ENCODE measurements at regions of chr20 and their contacts with region 1.

Region 1: DNA sequence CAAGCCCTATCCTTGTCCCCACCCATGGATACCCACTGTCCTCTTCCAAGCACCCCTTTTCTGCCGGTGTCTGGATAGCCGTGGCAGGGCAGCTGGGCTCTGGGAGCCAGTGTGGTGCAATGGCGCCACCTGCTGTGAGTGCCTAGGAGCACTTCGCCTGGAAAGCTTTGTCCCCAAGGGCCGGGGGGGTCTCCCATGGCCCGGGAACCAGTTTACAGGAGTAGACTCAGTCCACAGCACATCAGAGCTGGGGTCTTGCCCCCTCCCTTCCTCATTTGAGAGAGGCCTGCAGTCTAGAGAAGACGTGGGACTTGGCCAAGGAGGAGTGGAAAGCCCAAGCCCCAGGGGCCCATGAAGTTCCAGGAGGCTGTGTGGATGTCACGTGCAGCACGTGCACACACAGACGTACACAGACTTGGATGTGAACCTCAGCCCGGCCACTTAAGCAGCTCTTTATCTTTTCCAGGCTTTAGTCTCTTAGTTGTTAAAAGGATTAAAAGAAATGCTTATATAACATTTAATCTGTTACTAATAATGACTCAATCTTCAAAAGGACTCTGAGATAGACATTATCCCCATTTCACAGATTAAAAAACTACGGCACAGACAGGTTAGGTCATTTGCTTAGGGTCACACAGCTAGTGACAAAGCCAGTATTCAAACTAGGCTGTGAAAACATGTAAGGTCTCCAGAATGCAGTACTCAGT is 40.9 kb upstream of the CDH22 start:
- H3K4me3 ChIP-seq: no peak overlapping the region
- H3K27ac ChIP-seq: no peak overlapping the region
- H3K4me1 ChIP-seq: no peaks in the 10 kb centered on the region
- CTCF ChIP-seq: peak; percentile 69

Region 2: GRCh38 chr20:45987108-45987780 is 361.9 kb before region 1 on chr20:
- CTCF ChIA-PET with region 1: interaction called, 24 read pairs
- POLR2A ChIA-PET with region 1: no interaction called
- H3K4me3 ChIP-seq: no peak overlapping the region
- H3K27ac ChIP-seq: no peak overlapping the region
- H3K4me1 ChIP-seq: no peaks in the 10 kb centered on the region
- CTCF ChIP-seq: peak; percentile 76

Region 3: GRCh38 chr20:46132705-46133120 is 216.5 kb before region 1 on chr20:
- CTCF ChIA-PET with region 1: interaction called, 55 read pairs
- POLR2A ChIA-PET with region 1: no interaction called
- H3K4me3 ChIP-seq: no peak overlapping the region
- H3K27ac ChIP-seq: no peak overlapping the region
- H3K4me1 ChIP-seq: no peaks in the 10 kb centered on the region
- CTCF ChIP-seq: peak; percentile 93

Region 4: DNA sequence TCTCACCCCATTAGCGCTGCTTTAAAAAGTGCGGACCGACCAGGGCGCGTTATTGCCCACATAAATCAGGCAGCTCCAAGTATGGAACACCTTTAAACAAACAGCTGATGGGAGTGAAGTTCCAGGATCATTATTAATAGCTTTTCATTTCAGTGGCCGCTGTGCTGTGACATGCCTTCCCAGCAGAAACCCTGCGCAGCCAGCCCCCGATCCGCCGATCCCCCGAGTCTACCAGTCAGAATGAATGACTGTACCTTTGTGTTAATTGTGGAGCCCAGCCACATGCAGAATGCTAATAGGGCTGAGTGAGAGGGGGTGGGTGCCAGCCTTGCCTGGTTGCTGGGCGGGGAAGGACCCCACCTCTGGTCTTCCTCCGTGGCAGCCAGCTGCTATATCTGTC is 62.8 kb before region 1 on chr20:
- CTCF ChIA-PET with region 1: no interaction called
- POLR2A ChIA-PET with region 1: no interaction called
- H3K4me3 ChIP-seq: no peak overlapping the region
- H3K27ac ChIP-seq: no peak overlapping the region
- H3K4me1 ChIP-seq: no peaks in the 10 kb centered on the region
- CTCF ChIP-seq: no peak

Region 5: GRCh38 chr20:46307139-46307998 is 41.8 kb before region 1 on chr20:
- CTCF ChIA-PET with region 1: interaction called, 31 read pairs
- POLR2A ChIA-PET with region 1: no interaction called
- H3K4me3 ChIP-seq: peak overlapping the region; percentile 16
- H3K27ac ChIP-seq: no peak overlapping the region
- H3K4me1 ChIP-seq: peaks cover 3% of the 10 kb centered on the region; the same call in 1 of the 2 replicates
- CTCF ChIP-seq: peak; percentile 87

Region 6: DNA sequence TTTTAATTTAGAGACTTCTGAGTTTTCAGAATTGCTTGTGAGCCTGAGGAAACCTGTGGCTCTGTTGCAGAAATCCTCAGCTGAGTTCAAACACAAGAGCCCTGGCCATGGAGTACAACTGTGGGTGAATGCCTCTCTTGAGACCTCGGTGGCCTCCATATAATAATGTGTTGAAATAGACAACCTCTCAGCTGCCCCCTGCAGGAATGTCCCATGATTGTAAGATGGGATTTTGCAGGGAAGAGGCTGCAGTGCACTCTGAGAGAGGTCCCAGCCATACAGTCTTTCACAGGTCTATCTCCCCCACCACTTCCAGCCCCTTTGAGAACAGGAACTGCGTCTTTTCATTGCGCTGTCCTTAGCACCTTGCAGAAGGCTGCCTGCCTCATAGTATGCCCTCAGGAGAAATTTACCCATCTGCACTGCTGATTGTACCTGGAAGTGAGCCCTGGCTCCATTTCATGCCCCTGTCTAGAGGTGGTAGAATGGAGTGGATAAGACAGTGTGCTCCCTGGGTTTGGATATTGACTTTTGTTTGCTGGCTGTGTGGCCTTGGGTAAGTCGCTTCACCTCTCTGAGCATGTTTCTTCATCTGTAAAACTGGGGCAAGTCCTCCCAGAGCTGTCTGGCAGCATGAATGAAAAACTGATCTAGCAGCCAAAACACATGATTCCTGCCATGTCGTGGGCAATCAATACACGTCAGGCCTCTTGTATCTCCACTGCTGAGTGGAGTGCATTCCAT is 24.1 kb before region 1 on chr20:
- CTCF ChIA-PET with region 1: interaction called, 10 read pairs
- POLR2A ChIA-PET with region 1: no interaction called
- H3K4me3 ChIP-seq: no peak overlapping the region
- H3K27ac ChIP-seq: no peak overlapping the region
- H3K4me1 ChIP-seq: no peaks in the 10 kb centered on the region
- CTCF ChIP-seq: no peak

Region 7: DNA sequence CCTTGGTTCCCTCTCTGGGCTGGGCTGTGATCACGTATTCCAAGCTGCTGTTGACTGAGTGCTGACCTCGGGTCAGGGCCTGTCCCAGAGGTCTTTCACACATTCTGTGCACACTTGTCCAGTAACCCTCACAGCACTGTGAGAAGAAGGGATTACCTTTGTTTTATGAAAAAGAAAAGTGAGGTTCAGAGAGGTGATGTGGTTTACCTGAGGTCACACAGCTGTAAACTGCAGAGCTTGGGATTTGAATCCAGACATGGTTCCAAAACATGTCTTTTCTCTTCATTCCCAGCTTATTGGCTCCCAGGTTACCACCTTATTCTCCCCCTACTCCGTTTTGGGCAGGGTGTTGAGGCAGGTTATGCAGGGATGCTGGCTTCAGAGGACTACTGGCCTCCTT is 12.5 kb before region 1 on chr20:
- CTCF ChIA-PET with region 1: interaction called, 15 read pairs
- POLR2A ChIA-PET with region 1: no interaction called
- H3K4me3 ChIP-seq: no peak overlapping the region
- H3K27ac ChIP-seq: no peak overlapping the region
- H3K4me1 ChIP-seq: no peaks in the 10 kb centered on the region
- CTCF ChIP-seq: no peak

Region 8: GRCh38 chr20:46363800-46364634 is 14.8 kb after region 1 on chr20:
- CTCF ChIA-PET with region 1: interaction called, 13 read pairs
- POLR2A ChIA-PET with region 1: interaction called, 21 read pairs
- H3K4me3 ChIP-seq: peak overlapping the region; percentile 96
- H3K27ac ChIP-seq: peak overlapping the region; percentile 86
- H3K4me1 ChIP-seq: peaks cover 6% of the 10 kb centered on the region
- CTCF ChIP-seq: no peak; the same call in 1 of the 2 replicates

Measured in HEK293 (cell line).